CD8-positive, alpha-beta T cell (primary cell): ENCODE measurements at regions of chrX and their contacts with region 1.

Region 1: DNA sequence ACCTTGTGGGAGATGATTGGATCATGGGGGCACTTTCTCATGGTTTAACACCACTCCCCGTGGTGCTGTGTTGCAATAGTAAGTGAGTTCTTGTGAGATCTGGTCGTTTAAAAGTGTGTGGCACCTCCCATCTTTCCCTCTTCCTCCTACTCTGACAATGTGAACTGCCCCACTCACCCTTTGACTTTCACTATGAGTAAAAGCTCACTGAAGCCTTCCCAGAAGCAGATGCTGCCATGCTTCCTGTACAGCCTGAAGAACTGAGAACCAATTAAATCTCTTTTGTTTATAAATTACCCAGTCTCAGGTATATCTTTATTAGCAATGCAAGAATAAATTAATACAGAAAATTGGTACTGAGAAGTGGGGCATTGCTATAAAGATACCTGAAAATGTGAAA is 509.6 kb upstream of the CT83 start:
- DNase-seq: no peak
- ATAC-seq: no peak
- H3K4me3 ChIP-seq: no peak overlapping the region
- H3K4me3 Mint-ChIP-seq: no peak overlapping the region
- H3K27ac ChIP-seq: no peak overlapping the region
- H3K27ac Mint-ChIP-seq: no peak overlapping the region
- H3K4me1 ChIP-seq: no peaks in the 10 kb centered on the region
- H3K4me1 Mint-ChIP-seq: no peaks in the 10 kb centered on the region
- H3K27me3 ChIP-seq: no peaks in the 10 kb centered on the region
- H3K27me3 Mint-ChIP-seq: no peaks in the 10 kb centered on the region
- CTCF ChIP-seq: no peak

Region 2: DNA sequence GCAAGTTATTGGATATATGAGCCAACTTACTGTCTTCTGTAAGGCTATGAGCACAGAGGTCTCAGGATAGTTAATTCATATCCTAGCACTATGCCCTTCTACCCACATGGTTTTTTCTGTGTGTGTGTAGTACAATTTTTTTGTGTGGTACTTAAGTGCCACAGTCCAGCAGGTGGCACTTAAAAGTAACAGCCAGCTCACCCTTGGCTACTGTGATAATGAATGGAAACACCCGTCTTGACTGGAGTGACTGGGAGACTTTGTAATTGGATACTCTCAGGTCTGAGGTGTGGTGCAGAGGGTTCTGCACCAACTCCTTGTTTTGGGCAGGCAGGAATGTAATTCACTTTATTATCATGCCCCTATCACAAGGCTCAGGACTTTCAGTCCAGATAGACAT is 56.4 kb before region 1 on chrX:
- CTCF ChIA-PET with region 1: no interaction called
- POLR2A ChIA-PET with region 1: no interaction called
- intact Hi-C with region 1: loop called in 1 of 2 experiments (anchors 5 kb)
- DNase-seq: no peak
- ATAC-seq: no peak
- H3K4me3 ChIP-seq: no peak overlapping the region
- H3K4me3 Mint-ChIP-seq: no peak overlapping the region
- H3K27ac ChIP-seq: no peak overlapping the region
- H3K27ac Mint-ChIP-seq: no peak overlapping the region
- H3K4me1 ChIP-seq: no peaks in the 10 kb centered on the region
- H3K4me1 Mint-ChIP-seq: no peaks in the 10 kb centered on the region
- H3K27me3 ChIP-seq: no peaks in the 10 kb centered on the region
- H3K27me3 Mint-ChIP-seq: no peaks in the 10 kb centered on the region
- CTCF ChIP-seq: no peak